Psoas muscle (tissue), 8 donors: ENCODE measurements at regions of chr16 and their contacts with region 1.

Region 1: DNA sequence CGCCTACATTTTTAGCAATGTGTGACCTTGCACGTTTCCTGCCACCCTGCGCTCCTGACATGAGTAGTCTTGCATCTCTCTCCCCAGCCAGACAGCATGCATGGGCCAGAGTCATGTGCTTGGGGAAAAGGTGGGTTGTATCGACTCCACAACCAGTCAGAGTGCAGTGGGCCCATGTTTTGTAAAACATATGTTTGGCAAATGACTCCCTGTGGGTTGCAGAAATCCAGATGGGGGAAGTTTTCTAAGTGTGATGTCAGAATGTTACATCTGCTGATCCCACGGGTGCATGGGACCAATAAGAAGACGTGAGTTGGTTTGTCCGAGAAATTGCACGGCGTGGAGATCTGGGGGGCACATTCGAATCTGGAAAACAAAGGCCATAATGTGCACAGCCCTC is 147.1 kb downstream of the FOXL1 start:
- DNase-seq: peak in 1 of 2 donors; percentile 22
- ATAC-seq: no peak
- H3K4me3 ChIP-seq: no peak overlapping the region
- H3K27ac ChIP-seq: no peak overlapping the region
- H3K4me1 ChIP-seq: no peaks in the 10 kb centered on the region
- H3K27me3 ChIP-seq: peaks cover 0 to 18% (median 0%) of the 10 kb centered on the region in 3 donors
- CTCF ChIP-seq: no peak

Region 2: GRCh38 chr16:86343027-86343787 is 382.2 kb before region 1 on chr16:
- intact Hi-C with region 1: loop called in 1 of 2 experiments (anchors 5 kb)
- DNase-seq: peak in 1 of 2 donors; percentile 38
- ATAC-seq: no peak
- H3K4me3 ChIP-seq: no peak overlapping the region
- H3K27ac ChIP-seq: peak overlapping the region; percentile 23
- H3K4me1 ChIP-seq: no peaks in the 10 kb centered on the region
- H3K27me3 ChIP-seq: peaks cover 0 to 52% (median 4%) of the 10 kb centered on the region in 3 donors
- CTCF ChIP-seq: no peak